Dendritic cell treated with granulocyte-macrophage colony-stimulating factor and Interleukin-4, amounts not matched to agents 40 ng/mL and 50 ng/mL, for 4 days (primary cell): ENCODE measurements at regions of chr11 and their contacts with region 1.

Region 1: DNA sequence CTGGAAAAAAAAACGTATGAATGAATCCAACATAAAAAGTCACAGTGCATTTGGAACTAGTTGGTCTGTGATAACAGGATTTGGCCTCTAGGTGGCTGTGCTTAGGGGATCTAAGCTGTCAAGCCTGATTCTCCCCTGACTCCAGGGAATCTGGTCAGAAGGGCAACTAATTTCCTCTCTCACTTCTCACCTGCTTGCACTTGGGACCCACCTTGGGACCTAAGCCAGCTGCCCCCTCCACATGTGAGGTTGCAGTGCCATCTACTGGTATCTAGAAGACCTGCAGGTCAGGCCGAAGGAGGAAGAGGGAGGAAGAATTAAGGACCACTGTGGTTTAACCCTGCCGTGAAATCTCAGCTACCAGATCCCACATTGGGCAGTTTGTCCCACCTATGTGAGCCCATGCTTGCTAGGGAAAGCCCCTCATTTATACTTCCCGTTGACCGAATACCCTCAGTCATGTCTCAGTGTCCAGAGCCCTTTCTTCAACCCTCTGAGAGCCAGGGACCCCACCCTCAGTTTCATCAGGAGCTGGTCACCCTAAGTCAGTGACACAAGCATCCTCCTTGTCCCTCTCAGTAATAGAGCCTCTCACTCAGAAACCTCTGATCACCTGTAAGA is 33.2 kb upstream of the CAVIN3 start:
- H3K4me3 Mint-ChIP-seq: no peak overlapping the region
- H3K27ac Mint-ChIP-seq: no peak overlapping the region
- H3K4me1 Mint-ChIP-seq: peaks cover 5% of the 10 kb centered on the region
- H3K27me3 Mint-ChIP-seq: peaks cover 11% of the 10 kb centered on the region

Region 2: DNA sequence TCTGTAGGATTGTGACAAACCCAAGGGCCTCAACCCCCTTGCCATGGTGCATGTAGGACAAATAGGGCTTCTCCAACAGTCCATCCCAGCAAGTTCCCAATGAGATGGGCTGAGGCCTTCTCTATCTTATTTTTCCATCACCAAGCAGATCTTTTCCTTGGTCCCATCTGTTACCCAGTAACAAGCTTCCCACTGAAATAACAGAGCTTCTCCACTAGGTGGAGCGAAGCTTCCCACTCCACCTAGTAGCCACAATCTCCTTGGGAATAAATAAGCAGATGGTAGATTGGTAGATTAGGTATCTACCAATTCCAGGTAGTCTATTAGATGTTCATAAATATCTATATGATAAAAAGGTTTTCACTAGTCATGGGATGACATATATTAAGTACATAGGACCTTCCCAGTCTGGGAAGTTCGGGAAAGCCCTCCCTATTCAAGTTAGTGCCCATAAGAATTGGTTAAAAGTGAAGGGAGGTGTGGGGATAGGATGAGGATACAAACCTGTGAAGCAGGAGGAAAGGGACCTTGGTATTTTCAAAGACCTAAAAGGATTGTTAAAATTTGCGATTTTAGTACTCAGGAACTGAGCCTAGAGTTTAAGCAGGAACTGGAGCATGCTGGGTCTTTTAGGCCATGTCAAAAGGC is 360.7 kb before region 1 on chr11:
- intact Hi-C with region 1: loop called (anchors 2 kb)
- H3K4me3 Mint-ChIP-seq: no peak overlapping the region
- H3K27ac Mint-ChIP-seq: no peak overlapping the region
- H3K4me1 Mint-ChIP-seq: no peaks in the 10 kb centered on the region
- H3K27me3 Mint-ChIP-seq: peaks cover 11% of the 10 kb centered on the region

Region 3: GRCh38 chr11:6022956-6023355 is 330.5 kb before region 1 on chr11:
- intact Hi-C with region 1: loop called (anchors 1 kb)
- H3K4me3 Mint-ChIP-seq: no peak overlapping the region
- H3K27ac Mint-ChIP-seq: no peak overlapping the region
- H3K4me1 Mint-ChIP-seq: no peaks in the 10 kb centered on the region
- H3K27me3 Mint-ChIP-seq: peaks cover 31% of the 10 kb centered on the region

Region 4: GRCh38 chr11:6315811-6316425 is 37.6 kb before region 1 on chr11:
- intact Hi-C with region 1: loop called (anchors 2 kb)
- H3K4me3 Mint-ChIP-seq: no peak overlapping the region
- H3K27ac Mint-ChIP-seq: no peak overlapping the region
- H3K4me1 Mint-ChIP-seq: peaks cover 23% of the 10 kb centered on the region
- H3K27me3 Mint-ChIP-seq: peaks cover 60% of the 10 kb centered on the region

Region 5: DNA sequence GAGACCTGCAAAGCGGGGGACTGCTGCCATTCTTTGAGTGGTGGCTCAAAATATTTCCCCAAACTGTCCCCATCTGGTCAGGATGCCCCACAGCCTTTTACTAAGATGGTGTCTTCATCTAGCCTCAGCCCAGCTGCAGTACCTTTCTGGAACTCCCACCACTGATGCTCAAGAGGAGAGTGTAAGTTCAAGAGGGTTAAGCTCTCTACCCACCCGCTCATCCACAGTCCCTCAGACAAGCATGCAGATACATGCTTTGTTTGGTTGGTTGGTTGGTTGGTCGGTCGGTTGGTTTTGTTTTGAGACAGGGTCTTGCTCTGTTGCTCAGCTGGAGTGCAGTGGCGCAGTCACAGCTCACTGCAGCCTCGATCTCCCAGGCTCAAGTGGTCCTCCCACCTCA is 18.7 kb before region 1 on chr11:
- intact Hi-C with region 1: no loop called
- H3K4me3 Mint-ChIP-seq: no peak overlapping the region
- H3K27ac Mint-ChIP-seq: no peak overlapping the region
- H3K4me1 Mint-ChIP-seq: no peaks in the 10 kb centered on the region
- H3K27me3 Mint-ChIP-seq: peaks cover 29% of the 10 kb centered on the region

Region 6: DNA sequence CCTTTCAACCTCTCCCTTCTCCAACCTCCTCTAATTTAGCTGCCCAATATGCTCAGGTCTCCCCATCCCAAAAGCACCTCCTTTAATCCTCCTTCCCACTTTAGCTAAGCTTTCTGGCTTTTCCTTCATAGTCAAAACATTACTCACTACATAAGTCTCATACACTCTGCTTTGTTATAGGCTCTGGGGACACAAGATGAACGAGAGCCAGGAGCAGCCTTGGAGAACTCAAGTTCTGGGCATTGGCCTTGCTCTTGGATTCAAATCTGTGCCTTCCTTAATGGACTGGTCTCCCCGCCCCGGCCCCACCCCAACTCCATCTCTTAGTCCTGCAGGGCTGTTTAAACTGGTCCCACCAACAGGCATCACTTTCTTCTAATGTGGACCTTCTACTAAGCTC is 98.7 kb after region 1 on chr11:
- intact Hi-C with region 1: no loop called
- H3K4me3 Mint-ChIP-seq: no peak overlapping the region
- H3K27ac Mint-ChIP-seq: no peak overlapping the region
- H3K4me1 Mint-ChIP-seq: no peaks in the 10 kb centered on the region
- H3K27me3 Mint-ChIP-seq: no peaks in the 10 kb centered on the region